ENCODE measurements at regions of chr12 and their contacts with region 1.

Region 1: DNA sequence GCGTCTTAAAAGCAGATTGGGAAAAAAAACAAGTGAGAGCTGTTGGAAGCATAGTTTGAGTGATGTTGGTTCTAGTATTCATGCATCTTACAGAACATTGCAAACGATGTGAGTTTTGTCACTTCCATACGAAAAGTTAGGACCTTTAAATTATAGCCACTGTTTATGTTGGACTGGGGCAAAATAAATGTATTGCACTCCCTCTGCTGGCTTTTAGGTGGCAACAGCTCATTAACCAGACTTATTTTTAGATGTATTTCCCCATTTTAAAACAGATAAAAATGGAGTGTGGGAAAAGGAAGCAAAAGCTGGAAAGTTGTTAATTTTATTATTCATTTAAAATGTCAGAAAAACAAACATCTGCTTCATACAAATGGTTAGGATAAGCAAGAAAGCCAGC is 111.9 kb downstream of the LGR5 start:
- DNase-seq: peak; percentile 48
- H3K4me3 ChIP-seq: no peak overlapping the region
- H3K27ac ChIP-seq: no peak overlapping the region
- H3K4me1 ChIP-seq: peaks cover 2% of the 10 kb centered on the region
- H3K27me3 ChIP-seq: no peaks in the 10 kb centered on the region

Region 2: DNA sequence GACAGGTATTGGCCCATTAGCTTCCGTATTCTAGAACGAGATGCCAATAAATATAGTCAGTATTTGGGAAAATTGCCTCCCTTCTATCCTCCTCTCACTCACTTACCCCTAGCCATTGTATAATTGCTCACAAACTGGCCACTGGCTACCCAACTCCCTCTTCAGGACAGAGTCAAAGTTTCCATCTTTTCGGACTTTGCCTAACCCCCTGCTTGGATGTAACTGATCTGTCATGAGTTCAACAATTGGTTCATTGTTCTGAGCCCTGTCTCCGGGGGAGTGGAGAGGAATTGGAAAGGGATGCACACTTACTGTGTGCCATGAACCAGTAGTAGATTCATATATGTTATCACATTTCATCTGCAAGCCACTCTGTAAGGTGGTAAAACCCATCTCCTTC is 1714.3 kb before region 1 on chr12:
- in situ Hi-C with region 1: no loop called
- DNase-seq: no peak
- H3K4me3 ChIP-seq: no peak overlapping the region
- H3K27ac ChIP-seq: no peak overlapping the region
- H3K4me1 ChIP-seq: no peaks in the 10 kb centered on the region
- H3K27me3 ChIP-seq: peaks cover 9% of the 10 kb centered on the region; the same call in 1 of the 2 replicates

Region 3: GRCh38 chr12:71420775-71421406 is 130.6 kb before region 1 on chr12:
- in situ Hi-C with region 1: loop called (anchors 5 kb)
- DNase-seq: no peak
- H3K4me3 ChIP-seq: no peak overlapping the region
- H3K27ac ChIP-seq: no peak overlapping the region
- H3K4me1 ChIP-seq: no peaks in the 10 kb centered on the region
- H3K27me3 ChIP-seq: peaks cover 19% of the 10 kb centered on the region; the same call in 1 of the 2 replicates

Region 4: GRCh38 chr12:71694099-71694820 is 142.7 kb after region 1 on chr12:
- in situ Hi-C with region 1: no loop called
- DNase-seq: peak; percentile 6
- H3K4me3 ChIP-seq: no peak overlapping the region
- H3K27ac ChIP-seq: no peak overlapping the region
- H3K4me1 ChIP-seq: no peaks in the 10 kb centered on the region
- H3K27me3 ChIP-seq: no peaks in the 10 kb centered on the region

Measured in GM23248 (cell line).